MCF 10A (cell line): ENCODE measurements at regions of chr22 and their contacts with region 1.

Region 1: DNA sequence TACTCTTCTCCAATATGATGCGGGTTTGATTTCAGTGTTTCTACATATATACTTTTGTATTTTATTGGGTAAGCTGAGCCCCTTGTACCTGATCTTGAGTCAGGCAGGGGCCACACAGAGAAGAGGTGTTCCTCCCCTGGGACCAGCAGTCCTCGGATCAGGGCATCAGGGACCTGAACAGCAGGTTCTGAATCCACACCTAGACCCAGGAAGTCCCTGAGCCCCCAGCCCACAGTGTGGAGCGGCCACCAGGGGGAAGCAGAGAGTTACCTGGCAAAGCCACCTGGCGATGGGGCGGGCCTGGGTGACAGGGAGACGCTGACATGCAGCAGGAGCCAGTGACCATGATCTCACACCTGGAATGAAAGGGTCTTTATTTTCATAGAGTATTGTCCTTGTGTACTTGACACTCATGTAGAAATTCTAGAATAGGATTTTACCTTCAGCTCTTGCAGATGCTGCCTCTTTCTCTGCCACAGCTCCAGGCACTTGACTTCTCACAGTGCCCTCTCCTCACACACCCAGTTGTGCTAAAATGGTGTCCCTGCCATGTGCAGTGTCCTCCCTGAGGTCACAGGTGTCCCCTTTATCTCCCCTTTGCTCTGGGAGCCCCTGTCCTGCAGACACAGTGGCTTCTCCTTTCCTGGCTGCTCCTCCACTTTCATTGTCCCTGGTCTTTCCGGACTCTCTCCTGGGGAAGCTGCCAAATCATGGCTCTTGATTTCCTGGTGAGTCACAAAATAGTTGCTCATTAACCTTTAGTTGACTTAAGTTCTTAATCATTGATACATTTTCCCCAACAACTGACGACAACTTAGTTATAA is 48.5 kb downstream of the GGTLC2 start:
- DNase-seq: peak; percentile 86
- H3K4me3 Mint-ChIP-seq: no peak overlapping the region
- H3K27ac Mint-ChIP-seq: peak overlapping the region; percentile 3
- H3K4me1 Mint-ChIP-seq: peaks cover 15% of the 10 kb centered on the region
- H3K27me3 Mint-ChIP-seq: no peaks in the 10 kb centered on the region
- CTCF ChIP-seq: peak; percentile 75

Region 2: GRCh38 chr22:22616636-22617035 is 76.3 kb before region 1 on chr22:
- CTCF ChIA-PET with region 1: no interaction called
- POLR2A ChIA-PET with region 1: no interaction called
- intact Hi-C with region 1: no loop called
- DNase-seq: peak; percentile 38
- H3K4me3 Mint-ChIP-seq: no peak overlapping the region
- H3K27ac Mint-ChIP-seq: peak overlapping the region; percentile 73
- H3K4me1 Mint-ChIP-seq: peaks cover 11% of the 10 kb centered on the region
- H3K27me3 Mint-ChIP-seq: no peaks in the 10 kb centered on the region
- CTCF ChIP-seq: no peak

Region 3: GRCh38 chr22:22666307-22667091 is 26.4 kb before region 1 on chr22:
- CTCF ChIA-PET with region 1: interaction called, 12 read pairs
- POLR2A ChIA-PET with region 1: no interaction called
- intact Hi-C with region 1: no loop called
- DNase-seq: peak; percentile 52
- H3K4me3 Mint-ChIP-seq: no peak overlapping the region
- H3K27ac Mint-ChIP-seq: no peak overlapping the region
- H3K4me1 Mint-ChIP-seq: no peaks in the 10 kb centered on the region
- H3K27me3 Mint-ChIP-seq: peaks cover 4% of the 10 kb centered on the region
- CTCF ChIP-seq: peak; percentile 66

Region 4: DNA sequence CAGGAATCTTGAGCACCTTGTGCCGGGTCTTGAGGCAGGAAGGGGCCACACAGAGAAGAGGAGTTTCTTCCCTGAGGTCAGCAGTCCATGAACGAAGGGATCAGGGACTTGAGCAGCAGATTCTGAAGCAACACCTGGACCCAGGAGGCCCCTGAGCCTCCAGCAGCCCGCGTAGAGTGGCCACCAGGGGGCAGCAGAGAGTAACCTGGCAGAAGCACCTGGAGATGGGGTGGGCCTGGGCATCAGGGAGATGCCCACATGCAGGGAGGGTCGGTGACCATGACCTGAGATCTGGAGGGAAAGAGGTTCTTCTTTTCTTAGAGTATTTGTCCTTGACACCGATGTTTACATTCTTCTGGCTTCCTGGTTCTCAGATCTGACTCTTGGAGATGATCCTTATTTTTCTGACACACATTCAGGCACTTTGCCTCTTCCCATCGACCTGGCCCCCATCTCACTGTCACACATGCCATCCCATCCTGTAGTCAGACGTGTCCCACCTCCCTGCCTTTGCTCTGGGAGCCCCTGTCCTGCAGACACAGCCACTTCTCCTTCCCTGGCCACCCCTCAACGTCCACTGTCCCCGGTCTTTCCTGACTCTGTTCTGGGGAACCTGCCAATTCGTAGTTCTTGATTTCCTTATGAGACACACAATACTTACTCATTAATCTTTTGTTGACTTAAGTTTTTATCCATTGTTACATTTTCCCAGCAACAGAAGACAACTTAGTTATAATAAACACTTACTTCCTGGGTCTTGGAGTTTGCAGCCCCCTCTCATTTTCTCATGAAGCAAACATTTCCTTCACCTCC is 18.0 kb after region 1 on chr22:
- CTCF ChIA-PET with region 1: interaction called, 68 read pairs
- POLR2A ChIA-PET with region 1: no interaction called
- intact Hi-C with region 1: no loop called
- DNase-seq: peak; percentile 60
- H3K4me3 Mint-ChIP-seq: no peak overlapping the region
- H3K27ac Mint-ChIP-seq: no peak overlapping the region
- H3K4me1 Mint-ChIP-seq: no peaks in the 10 kb centered on the region
- H3K27me3 Mint-ChIP-seq: no peaks in the 10 kb centered on the region
- CTCF ChIP-seq: peak; percentile 95

Region 5: GRCh38 chr22:22802339-22802970 is 109.5 kb after region 1 on chr22:
- CTCF ChIA-PET with region 1: no interaction called
- POLR2A ChIA-PET with region 1: no interaction called
- intact Hi-C with region 1: no loop called
- DNase-seq: no peak
- H3K4me3 Mint-ChIP-seq: no peak overlapping the region
- H3K27ac Mint-ChIP-seq: no peak overlapping the region
- H3K4me1 Mint-ChIP-seq: no peaks in the 10 kb centered on the region
- H3K27me3 Mint-ChIP-seq: peaks cover 64% of the 10 kb centered on the region
- CTCF ChIP-seq: peak; percentile 9

Region 6: GRCh38 chr22:22818861-22819855 is 126.2 kb after region 1 on chr22:
- CTCF ChIA-PET with region 1: no interaction called
- POLR2A ChIA-PET with region 1: no interaction called
- intact Hi-C with region 1: no loop called
- DNase-seq: no peak
- H3K4me3 Mint-ChIP-seq: no peak overlapping the region
- H3K27ac Mint-ChIP-seq: no peak overlapping the region
- H3K4me1 Mint-ChIP-seq: no peaks in the 10 kb centered on the region
- H3K27me3 Mint-ChIP-seq: peaks cover 44% of the 10 kb centered on the region
- CTCF ChIP-seq: no peak

Region 7: DNA sequence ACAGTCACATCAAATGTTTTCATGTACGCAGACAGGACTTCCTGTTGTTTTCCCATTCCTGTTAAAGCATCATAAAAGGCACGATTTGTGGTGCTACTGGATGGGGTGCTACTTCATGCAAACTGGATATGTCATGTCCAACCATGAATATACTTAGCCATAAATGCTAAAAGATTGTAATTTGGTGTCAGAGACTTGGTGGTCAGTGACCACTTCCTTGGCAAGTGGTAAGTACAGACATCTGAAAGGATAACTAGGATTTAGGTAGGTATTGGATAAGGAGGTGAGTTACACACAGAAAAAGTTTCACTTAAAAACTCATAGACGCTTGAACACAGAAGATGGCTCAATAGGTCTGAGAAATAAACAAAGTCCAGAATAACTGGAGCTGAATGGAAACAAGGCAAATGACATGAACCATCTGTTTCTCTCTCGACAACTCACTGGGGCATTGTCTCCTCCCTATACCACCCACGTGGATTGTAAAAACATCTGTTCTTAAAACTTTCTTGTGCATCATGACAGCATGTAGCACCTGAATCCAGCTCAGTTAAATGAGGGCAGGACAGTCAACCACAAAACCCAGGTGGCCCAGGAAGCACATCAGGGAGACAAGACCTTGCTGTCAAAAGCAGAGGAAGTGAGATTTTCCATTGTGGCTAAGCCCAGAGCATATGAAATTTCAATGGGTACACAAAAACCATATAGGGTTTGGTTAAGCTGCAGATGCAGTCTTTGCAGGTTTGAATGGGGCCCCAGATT is 172.6 kb after region 1 on chr22:
- CTCF ChIA-PET with region 1: no interaction called
- POLR2A ChIA-PET with region 1: no interaction called
- intact Hi-C with region 1: no loop called
- DNase-seq: no peak
- H3K4me3 Mint-ChIP-seq: no peak overlapping the region
- H3K27ac Mint-ChIP-seq: no peak overlapping the region
- H3K4me1 Mint-ChIP-seq: no peaks in the 10 kb centered on the region
- H3K27me3 Mint-ChIP-seq: peaks cover 92% of the 10 kb centered on the region
- CTCF ChIP-seq: no peak